Posterior vena cava (tissue), 2 donors: ENCODE measurements at regions of chr11 and their contacts with region 1.

Region 1: GRCh38 chr11:31437742-31438435 is 68.2 kb downstream of the DNAJC24 start:
- DNase-seq: no peak

Region 2: GRCh38 chr11:31450841-31451240 is 13.0 kb after region 1 on chr11:
- intact Hi-C with region 1: loop called in 1 of 2 experiments (anchors 1 kb)
- DNase-seq: no peak